Activated naive CD4-positive, alpha-beta T cell treated with anti-CD3 and anti-CD28 coated beads for 36 hours (primary cell): ENCODE measurements at regions of chr3 and their contacts with region 1.

Region 1: GRCh38 chr3:52056968-52057805 is 816 bp upstream of the DUSP7 start:
- DNase-seq: peak; percentile 100
- H3K4me3 Mint-ChIP-seq: peak overlapping the region; percentile 78
- H3K27ac Mint-ChIP-seq: peak overlapping the region; percentile 76
- H3K4me1 Mint-ChIP-seq: peaks cover 25% of the 10 kb centered on the region
- H3K27me3 Mint-ChIP-seq: no peaks in the 10 kb centered on the region

Region 2: DNA sequence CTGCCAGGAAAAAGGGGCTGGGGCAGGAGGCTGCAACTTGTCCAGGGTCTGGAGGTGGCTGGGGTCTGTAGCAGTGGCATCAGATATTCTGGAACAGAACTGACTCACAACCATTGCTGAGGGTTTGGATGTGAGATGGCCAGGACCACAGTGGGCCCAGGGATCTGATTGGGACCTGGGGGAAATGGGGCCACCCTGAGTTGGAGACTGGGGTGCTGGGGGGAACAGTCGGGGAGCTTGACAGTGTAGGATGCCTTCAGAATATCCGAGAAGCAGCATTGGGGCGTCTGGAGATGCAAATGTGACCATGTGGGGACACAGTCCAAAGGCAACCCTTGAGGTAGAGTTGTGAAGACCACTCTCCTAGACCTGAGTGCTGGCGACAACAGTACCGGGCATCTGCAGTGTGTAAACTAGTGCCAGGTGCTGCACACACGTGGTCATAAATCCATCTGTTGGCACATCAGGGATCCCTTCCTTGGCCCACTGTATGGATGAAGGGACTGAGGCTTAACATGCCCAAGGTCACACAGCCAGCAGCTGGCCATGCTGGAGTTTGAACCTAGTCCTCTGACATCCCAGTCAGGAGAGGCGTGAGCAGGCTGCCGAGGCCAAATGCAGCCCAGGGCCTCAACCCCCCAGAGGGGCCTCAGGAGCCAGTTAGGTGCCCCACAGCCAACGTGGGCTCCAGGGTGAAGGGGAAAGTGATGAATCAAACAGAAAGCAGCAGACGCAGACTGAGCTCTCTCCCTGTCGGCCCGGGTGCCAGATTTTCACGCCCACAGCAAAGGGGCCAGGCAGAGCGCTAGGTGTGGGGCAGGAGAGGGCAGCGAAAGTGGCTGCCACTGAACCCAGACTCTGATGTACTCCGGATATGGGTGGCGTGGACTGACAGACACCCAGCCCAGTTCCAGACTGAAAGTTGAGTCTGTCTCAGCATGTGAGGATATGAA is 1469.1 kb before region 1 on chr3:
- CTCF ChIA-PET with region 1: no interaction called
- intact Hi-C with region 1: loop called (anchors 10 kb)
- DNase-seq: peak; percentile 94
- H3K4me3 Mint-ChIP-seq: peak overlapping the region; percentile 42
- H3K27ac Mint-ChIP-seq: peak overlapping the region; percentile 99
- H3K4me1 Mint-ChIP-seq: peaks cover 91% of the 10 kb centered on the region
- H3K27me3 Mint-ChIP-seq: no peaks in the 10 kb centered on the region

Region 3: DNA sequence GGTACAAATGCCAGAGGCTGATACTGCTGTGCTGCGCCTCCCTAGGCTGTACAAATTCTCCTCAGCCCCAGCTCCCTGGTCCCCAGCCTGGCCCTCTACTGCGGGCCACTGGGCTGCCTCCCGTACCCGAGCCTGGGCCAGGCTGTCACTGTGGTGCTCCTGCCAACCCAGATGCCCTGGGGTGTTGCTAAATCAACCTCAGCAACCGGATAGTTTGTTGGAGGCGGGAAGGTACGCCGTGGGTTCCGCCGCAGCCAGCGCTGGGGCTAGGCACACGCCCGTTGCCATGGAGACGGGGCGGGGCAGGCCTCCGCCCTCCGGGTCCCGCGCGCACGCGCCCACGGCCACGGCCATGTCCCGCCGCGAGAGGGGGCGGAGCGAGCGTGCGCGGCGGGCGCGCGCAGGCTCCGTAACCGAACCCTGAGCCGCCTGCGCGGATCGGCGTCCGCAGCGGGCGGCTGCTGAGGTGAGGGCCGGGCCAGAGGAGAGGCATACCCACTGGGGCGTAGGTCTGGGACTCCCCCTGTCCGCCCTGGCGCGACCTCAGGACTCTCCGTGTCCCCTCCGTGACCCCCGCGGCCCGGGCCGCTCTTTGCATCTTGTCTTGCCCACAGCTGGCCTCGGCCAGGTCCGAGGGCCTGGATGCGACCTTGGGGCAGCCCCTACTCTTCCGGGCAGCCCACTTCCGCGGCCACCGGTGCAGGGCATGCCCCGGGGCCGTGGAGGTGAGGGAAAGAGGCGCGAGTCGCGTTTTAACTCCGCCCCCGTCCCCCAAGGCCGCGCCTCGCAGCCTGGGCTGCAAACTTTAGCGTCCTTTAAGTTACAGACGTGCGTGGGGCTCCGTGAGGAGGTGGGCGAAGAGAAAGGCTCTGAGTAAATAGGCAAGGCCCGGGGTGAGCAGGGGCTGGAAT is 386.1 kb before region 1 on chr3 and contains the start of gene TEX264:
- CTCF ChIA-PET with region 1: no interaction called
- intact Hi-C with region 1: loop called (anchors 5 kb)
- DNase-seq: peak; percentile 85
- H3K4me3 Mint-ChIP-seq: peak within 1 kb of the TSS; percentile 85
- H3K27ac Mint-ChIP-seq: peak within 1 kb of the TSS; percentile 66
- H3K4me1 Mint-ChIP-seq: peaks cover 61% of the 10 kb centered on the region
- H3K27me3 Mint-ChIP-seq: no peaks in the 10 kb centered on the region
- total RNA-seq, gene TEX264: 23.7 to 26.6 TPM

Region 4: DNA sequence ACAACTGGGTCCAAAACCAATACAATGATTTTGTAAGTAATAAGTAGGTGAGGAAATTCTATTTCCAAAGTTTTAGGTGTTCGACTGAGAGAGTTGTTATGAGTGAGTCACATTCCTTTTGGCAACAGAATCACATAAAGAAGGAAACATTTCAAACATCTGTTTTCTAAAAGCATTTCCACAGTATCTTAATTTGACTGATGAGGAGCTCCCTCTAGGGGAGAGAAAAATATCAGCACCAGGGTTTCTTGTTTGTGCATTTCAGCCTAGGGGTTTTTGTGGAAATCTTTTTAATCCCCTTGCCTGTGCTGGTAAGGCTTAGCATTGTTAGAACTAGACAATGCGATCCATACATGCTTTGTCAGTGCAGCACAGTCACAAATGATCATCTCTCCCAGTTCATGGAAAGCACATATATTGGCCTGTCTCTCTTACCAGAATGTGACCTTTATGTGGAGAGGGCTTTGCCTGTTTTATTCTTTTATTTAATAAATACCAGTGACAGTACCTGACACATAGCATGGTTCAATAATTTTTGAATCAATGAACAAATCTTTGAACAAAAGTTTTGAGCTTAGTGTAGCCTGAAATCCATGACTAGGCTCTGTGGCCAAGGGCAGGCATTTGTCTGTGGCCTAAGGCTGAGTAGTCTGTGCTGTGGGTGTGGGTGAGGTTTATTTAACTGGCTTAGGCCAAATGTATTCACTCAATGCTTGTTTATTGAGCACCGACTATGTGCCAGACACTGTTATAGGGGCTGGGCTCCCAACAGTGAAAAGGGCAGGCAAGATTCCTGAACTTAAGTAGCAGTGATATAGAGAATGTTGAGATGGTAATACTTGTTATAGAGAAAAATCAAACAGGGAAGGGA is 257.1 kb before region 1 on chr3:
- CTCF ChIA-PET with region 1: no interaction called
- intact Hi-C with region 1: no loop called
- DNase-seq: peak; percentile 35
- H3K4me3 Mint-ChIP-seq: no peak overlapping the region
- H3K27ac Mint-ChIP-seq: no peak overlapping the region
- H3K4me1 Mint-ChIP-seq: peaks cover 22% of the 10 kb centered on the region
- H3K27me3 Mint-ChIP-seq: peaks cover 5% of the 10 kb centered on the region

Region 5: GRCh38 chr3:52001443-52001974 is 55.7 kb before region 1 on chr3:
- CTCF ChIA-PET with region 1: interaction called, 46 read pairs
- intact Hi-C with region 1: loop called (anchors 1 kb)
- DNase-seq: peak; percentile 87
- H3K4me3 Mint-ChIP-seq: no peak overlapping the region
- H3K27ac Mint-ChIP-seq: no peak overlapping the region
- H3K4me1 Mint-ChIP-seq: peaks cover 9% of the 10 kb centered on the region
- H3K27me3 Mint-ChIP-seq: no peaks in the 10 kb centered on the region

Region 6: GRCh38 chr3:52144034-52144795 is 87.0 kb after region 1 on chr3:
- CTCF ChIA-PET with region 1: interaction called, 23 read pairs
- intact Hi-C with region 1: loop called (anchors 1 kb)
- DNase-seq: peak; percentile 86
- H3K4me3 Mint-ChIP-seq: no peak overlapping the region
- H3K27ac Mint-ChIP-seq: no peak overlapping the region
- H3K4me1 Mint-ChIP-seq: peaks cover 4% of the 10 kb centered on the region
- H3K27me3 Mint-ChIP-seq: no peaks in the 10 kb centered on the region

Region 7: GRCh38 chr3:52220380-52221026 is 163.3 kb after region 1 on chr3:
- CTCF ChIA-PET with region 1: interaction called, 3 read pairs
- intact Hi-C with region 1: loop called (anchors 10 kb)
- DNase-seq: peak; percentile 97
- H3K4me3 Mint-ChIP-seq: no peak overlapping the region
- H3K27ac Mint-ChIP-seq: no peak overlapping the region
- H3K4me1 Mint-ChIP-seq: peaks cover 82% of the 10 kb centered on the region
- H3K27me3 Mint-ChIP-seq: no peaks in the 10 kb centered on the region

Region 8: GRCh38 chr3:52455283-52456168 is 398.3 kb after region 1 on chr3 and contains the start of gene NISCH:
- CTCF ChIA-PET with region 1: no interaction called
- intact Hi-C with region 1: loop called (anchors 1 kb)
- DNase-seq: peak; percentile 96
- H3K4me3 Mint-ChIP-seq: peak within 1 kb of the TSS; percentile 94
- H3K27ac Mint-ChIP-seq: peak within 1 kb of the TSS; percentile 96
- H3K4me1 Mint-ChIP-seq: peaks cover 35% of the 10 kb centered on the region
- H3K27me3 Mint-ChIP-seq: no peaks in the 10 kb centered on the region
- total RNA-seq, gene NISCH: 50.4 to 52.5 TPM